Ovary (tissue), 10 donors: ENCODE measurements at regions of chr3 and their contacts with region 1.

Region 1: GRCh38 chr3:49445381-49445780 is 16.3 kb upstream of the NICN1 start:
- DNase-seq: no peak
- H3K4me3 ChIP-seq: no peak overlapping the region
- H3K27ac ChIP-seq: no peak overlapping the region
- H3K4me1 ChIP-seq: no peaks in the 10 kb centered on the region
- H3K27me3 ChIP-seq: no peaks in the 10 kb centered on the region
- CTCF ChIP-seq: no peak
- EP300 ChIP-seq: no peak
- POLR2A ChIP-seq: no peak

Region 2: DNA sequence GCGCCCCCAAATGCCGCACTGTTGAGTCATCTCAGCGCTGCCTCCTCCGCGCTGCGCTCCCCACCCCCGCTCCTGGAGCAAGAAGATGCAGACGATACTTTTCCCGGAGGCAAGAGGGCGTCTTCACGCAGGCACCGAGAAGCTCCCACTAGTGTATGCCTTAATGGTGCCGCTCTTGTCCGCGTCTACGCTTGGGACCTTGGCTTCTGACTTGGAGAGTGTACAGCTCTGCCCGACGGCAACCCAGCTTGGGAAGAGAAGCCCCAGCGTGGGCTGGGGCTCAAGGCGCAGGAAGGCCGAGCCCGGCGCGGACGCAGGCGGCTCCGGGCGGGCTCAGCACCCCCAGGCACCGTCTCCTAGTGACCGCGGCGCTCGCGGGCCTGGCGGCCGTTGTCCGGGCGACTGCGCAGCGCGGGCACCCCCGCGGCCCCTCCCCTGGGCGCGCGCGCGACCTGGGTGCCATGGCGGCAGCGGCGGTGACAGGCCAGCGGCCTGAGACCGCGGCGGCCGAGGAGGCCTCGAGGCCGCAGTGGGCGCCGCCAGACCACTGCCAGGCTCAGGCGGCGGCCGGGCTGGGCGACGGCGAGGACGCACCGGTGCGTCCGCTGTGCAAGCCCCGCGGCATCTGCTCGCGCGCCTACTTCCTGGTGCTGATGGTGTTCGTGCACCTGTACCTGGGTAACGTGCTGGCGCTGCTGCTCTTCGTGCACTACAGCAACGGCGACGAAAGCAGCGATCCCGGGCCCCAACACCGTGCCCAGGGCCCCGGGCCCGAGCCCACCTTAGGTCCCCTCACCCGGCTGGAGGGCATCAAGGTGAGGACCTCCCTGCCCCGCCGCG is 455.4 kb before region 1 on chr3 and contains the start of gene P4HTM:
- intact Hi-C with region 1: loop called in 2 of 4 experiments (anchors 5 to 10 kb)
- DNase-seq: peak; percentile 92 to 95 (median 93)
- H3K4me3 ChIP-seq: peak within 1 kb of the TSS; percentile 68
- H3K27ac ChIP-seq: peak within 1 kb of the TSS; percentile 95 to 96
- H3K4me1 ChIP-seq: peaks cover 3% of the 10 kb centered on the region
- H3K27me3 ChIP-seq: no peaks in the 10 kb centered on the region
- CTCF ChIP-seq: peak; percentile 16 to 73 (median 63)
- EP300 ChIP-seq: no peak
- POLR2A ChIP-seq: peak; percentile 74
- total RNA-seq, gene P4HTM: 31.5 to 125 (median 46.5) TPM

Region 3: DNA sequence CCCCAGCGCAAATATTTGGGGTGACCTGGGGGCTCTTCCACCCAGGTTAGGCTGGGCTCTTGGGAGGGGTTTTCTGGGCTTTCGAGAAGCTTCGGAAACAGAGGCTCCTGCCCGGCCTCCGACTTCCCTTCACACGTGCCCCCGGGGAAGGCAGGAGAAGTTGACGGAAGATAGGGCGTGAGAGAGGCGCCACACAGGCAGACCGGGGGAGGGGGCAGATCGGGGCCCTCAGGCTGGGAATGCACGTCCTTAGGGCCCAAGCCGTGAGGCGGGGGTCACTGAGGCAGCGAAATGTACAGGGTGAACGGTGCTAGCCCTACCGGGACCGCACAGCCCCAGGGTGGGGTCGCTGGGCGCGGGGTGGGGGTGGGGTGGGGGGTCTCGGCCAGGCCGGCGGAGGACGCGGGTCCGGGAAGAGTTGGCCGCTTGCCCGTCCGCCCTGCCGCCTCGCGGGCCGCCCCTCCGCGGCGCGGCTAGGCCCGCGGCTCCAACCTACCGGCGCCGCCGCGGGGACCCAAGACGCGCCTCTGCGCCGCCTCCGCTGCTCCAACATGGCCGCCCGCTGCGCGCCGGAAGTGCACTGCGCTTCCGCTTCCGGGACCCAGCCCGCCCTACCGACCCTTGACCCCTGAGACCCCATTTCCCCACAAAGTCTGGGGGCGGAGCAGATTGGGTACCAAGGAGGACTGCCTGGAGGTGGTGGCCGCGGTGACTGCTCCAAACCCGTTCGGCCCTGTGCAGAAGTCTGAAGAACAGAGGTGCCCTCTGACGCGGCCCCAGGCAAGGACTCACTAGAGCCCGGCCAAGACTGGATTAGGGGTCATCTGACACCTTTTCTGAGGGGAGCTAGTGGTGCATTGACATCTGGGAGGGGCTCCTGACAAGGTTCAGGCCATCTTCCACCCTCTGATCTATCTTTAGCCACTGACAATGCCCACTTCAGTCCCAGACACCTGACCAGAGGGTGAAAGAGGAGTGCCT is 279.3 kb before region 1 on chr3 and contains the start of gene CCDC71:
- intact Hi-C with region 1: loop called in 3 of 4 experiments (anchors 10 kb)
- DNase-seq: peak; percentile 70 to 89 (median 81)
- H3K4me3 ChIP-seq: peak within 1 kb of the TSS; percentile 77
- H3K27ac ChIP-seq: peak within 1 kb of the TSS; percentile 88 to 89
- H3K4me1 ChIP-seq: no peaks in the 10 kb centered on the region
- H3K27me3 ChIP-seq: no peaks in the 10 kb centered on the region
- CTCF ChIP-seq: no peak
- EP300 ChIP-seq: no peak
- POLR2A ChIP-seq: peak; percentile 70
- total RNA-seq, gene CCDC71: 24.8 to 39.0 (median 32.7) TPM

Region 4: GRCh38 chr3:49171119-49171774 is 274.1 kb before region 1 on chr3 and contains the start of gene KLHDC8B:
- intact Hi-C with region 1: loop called in 3 of 4 experiments (anchors 10 kb)
- DNase-seq: peak; percentile 90 to 93 (median 91)
- H3K4me3 ChIP-seq: peak within 1 kb of the TSS; percentile 72
- H3K27ac ChIP-seq: peak within 1 kb of the TSS; percentile 75 to 89
- H3K4me1 ChIP-seq: peaks cover 14% of the 10 kb centered on the region
- H3K27me3 ChIP-seq: no peaks in the 10 kb centered on the region
- CTCF ChIP-seq: peak; percentile 76 to 95 (median 94)
- EP300 ChIP-seq: no peak
- POLR2A ChIP-seq: peak; percentile 68
- total RNA-seq, gene KLHDC8B: 67.1 to 244 (median 131) TPM

Region 5: GRCh38 chr3:49339945-49340800 is 105.2 kb before region 1 on chr3 and contains the start of gene USP4:
- intact Hi-C with region 1: loop called in 2 of 4 experiments (anchors 10 kb)
- DNase-seq: peak; percentile 90 to 95 (median 91)
- H3K4me3 ChIP-seq: peak within 1 kb of the TSS; percentile 92
- H3K27ac ChIP-seq: peak within 1 kb of the TSS; percentile 40 to 92
- H3K4me1 ChIP-seq: peaks cover 5% of the 10 kb centered on the region
- H3K27me3 ChIP-seq: no peaks in the 10 kb centered on the region
- CTCF ChIP-seq: peak; percentile 11 to 74 (median 59)
- EP300 ChIP-seq: no peak
- POLR2A ChIP-seq: peak; percentile 57
- total RNA-seq, gene USP4: 12.5 to 71.7 (median 52.5) TPM

Region 6: DNA sequence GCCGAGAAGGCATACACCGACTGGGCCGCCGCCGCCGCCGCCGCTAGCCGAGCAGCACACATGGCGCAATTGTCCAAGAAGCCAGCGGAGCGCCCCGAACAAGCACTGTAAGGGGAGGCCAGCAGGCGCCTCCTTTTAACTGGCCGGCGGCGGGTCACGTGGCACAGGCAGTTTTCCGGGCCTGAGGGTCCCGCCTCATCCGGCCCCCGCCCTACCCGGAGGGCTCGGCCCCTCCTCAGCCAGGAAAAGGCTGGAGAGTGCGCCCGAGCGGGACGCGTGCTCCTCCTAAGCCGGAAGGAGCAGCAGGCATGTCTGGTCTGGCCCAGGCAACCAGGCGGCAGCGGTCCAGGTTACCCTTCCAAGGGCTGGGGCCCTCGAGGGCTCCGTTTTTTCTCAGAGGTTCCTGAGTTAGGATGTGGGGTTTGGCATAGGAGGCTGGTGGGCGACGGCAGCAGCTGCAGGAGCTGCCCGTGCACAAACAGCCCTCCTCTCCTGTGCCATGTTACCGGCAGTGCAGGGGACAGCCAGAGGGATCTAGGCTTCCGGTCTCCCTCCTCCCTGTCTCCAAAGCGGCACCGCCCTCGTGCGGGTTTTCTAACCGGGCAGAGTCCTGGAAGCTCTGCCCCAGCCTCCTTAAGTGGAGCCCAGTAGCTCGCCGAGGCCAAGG is 87.0 kb before region 1 on chr3 and contains the start of gene GPX1:
- intact Hi-C with region 1: loop called in 1 of 4 experiments (anchors 10 kb)
- DNase-seq: peak; percentile 94 to 96 (median 95)
- H3K4me3 ChIP-seq: peak within 1 kb of the TSS; percentile 71
- H3K27ac ChIP-seq: peak within 1 kb of the TSS; percentile 10 to 73
- H3K4me1 ChIP-seq: peaks cover 4% of the 10 kb centered on the region
- H3K27me3 ChIP-seq: no peaks in the 10 kb centered on the region
- CTCF ChIP-seq: no peak
- EP300 ChIP-seq: no peak
- POLR2A ChIP-seq: peak; percentile 80
- total RNA-seq, gene GPX1: 114 to 207 (median 152) TPM